BJ (cell line): ENCODE measurements at regions of chr4 and their contacts with region 1.

Region 1: DNA sequence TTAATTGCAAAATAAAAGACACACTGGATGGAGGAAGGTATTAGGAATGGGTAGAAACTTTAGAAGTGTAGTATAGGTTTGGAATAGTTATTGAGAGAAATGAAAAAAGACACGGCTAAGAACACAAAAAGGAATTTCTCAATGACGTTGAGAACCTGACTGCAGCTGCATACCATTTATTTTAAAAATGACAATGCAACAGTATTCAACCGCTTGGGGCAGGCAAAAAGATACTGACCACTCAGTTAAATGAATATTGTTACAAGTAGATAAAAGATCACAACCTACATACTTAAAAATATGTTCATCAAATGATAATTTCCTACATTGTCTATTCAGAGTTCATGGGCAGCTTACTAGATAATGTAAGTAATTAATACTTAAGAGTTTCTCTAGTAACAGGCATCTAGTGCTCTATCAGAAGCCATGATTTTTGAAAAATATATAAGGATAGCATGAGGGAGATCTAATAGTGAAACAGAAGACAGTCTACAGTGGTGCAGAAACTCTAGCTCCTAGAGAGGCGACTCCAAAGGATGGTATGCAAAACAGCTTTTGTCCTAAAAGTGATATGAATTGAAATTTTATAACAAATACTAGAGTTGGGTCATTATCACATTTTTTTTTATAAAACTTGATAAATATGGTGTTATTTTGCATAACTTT is 216.2 kb upstream of the VEGFC start:
- DNase-seq: no peak
- H3K4me3 ChIP-seq: no peak overlapping the region
- H3K27me3 ChIP-seq: no peaks in the 10 kb centered on the region
- CTCF ChIP-seq: no peak

Region 2: DNA sequence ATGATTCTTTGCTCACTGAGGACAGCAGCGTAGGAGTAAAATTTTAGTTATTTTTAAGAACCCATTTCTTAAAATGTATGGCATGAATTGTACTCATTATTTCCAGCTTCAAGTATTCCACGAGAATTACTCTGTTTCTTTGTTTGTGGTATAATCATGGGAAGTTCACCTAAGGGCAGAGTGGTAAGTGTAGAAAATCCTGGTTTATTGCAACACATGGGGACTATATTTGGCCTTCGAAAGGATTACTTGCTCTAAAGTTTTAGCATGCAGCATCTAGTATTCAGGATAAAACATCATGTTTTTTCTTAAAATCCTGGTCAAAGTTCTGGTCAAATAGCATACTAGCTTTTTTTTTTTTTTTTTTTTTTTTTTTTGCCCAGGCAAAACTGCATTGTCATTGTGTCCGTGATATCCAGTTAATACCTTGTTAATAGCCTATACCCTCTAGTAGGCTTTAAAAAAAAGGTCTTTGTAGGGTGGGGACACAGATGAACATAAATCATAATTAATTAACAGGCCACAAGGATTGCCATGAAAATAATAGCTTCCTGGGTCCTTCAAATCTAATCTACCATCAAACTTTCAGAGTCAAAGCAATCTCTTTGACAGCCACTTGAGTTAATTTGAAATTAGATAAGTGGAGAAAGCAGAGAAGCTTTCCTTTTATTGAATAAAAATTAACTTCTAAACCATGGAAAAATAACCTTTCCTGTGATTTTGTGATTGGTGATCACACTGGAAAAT is 171.6 kb before region 1 on chr4:
- CTCF ChIA-PET with region 1: no interaction called
- POLR2A ChIA-PET with region 1: interaction called, 16 read pairs
- DNase-seq: no peak
- H3K4me3 ChIP-seq: no peak overlapping the region
- H3K27me3 ChIP-seq: no peaks in the 10 kb centered on the region
- CTCF ChIP-seq: no peak

Region 3: GRCh38 chr4:177108708-177109107 is 99.7 kb after region 1 on chr4:
- CTCF ChIA-PET with region 1: no interaction called
- POLR2A ChIA-PET with region 1: no interaction called
- DNase-seq: no peak
- H3K4me3 ChIP-seq: no peak overlapping the region
- H3K27me3 ChIP-seq: no peaks in the 10 kb centered on the region
- CTCF ChIP-seq: peak; percentile 59